A549 (cell line): ENCODE measurements at regions of chr10 and their contacts with region 1.

Region 1: DNA sequence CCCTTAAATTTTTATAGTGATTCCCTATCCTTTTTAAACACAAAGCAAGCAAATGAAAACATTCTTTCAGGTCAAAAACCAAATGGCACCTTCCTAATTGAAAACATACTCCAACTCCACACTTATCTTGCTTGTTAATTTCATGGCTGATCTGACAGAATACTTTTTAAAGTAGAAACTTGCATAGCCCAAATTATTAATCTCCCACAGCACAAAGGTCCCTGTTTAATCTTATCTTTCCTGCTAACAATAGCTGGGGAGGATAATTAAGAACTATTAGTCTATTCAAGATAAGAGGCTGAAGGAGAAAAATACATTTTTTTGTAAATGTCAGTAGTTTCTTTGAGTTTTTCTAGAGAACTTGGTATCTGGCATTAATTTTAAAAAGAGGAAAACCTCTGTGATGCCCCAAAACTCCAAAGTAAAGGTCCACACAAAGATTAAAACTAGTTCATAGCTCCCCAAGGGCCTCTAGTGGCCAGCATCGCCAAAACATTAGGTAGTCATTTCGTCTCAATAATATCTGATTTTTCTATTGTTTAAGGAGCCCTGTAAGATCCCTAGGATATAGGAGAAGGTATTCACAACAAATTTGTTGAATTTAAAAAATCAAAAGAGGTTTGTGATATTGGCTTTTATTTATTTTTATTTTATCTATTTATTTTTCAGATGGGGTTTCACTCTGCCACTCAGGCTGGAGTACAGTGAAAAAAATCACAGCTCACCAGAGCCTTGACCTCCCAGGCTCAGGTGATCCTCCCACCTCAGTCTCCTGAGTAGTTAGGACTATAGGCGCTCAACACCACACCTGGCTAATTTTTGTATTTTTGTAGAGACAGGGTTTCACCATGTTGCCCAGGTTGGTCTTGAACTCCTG is 14.7 kb downstream of the CDNF start:
- DNase-seq: peak; percentile 66
- ATAC-seq: peak in 1 of 2 experiments; percentile 56; a peak in 3 of 6 replicates
- H3K4me3 ChIP-seq: no peak overlapping the region
- H3K27ac ChIP-seq: peak overlapping the region; percentile 94 to 96
- H3K4me1 ChIP-seq: peaks cover 52% of the 10 kb centered on the region
- CTCF ChIP-seq: peak; percentile 96
- EP300 ChIP-seq: no peak
- POLR2A ChIP-seq: no peak
- RAD21 ChIP-seq: peak; percentile 97 to 98

Region 2: GRCh38 chr10:14195433-14195832 is 627.7 kb before region 1 on chr10:
- CTCF ChIA-PET with region 1: interaction called, 16 read pairs
- POLR2A ChIA-PET with region 1: no interaction called
- DNase-seq: no peak
- ATAC-seq: no peak
- H3K4me3 ChIP-seq: no peak overlapping the region
- H3K27ac ChIP-seq: no peak overlapping the region
- H3K4me1 ChIP-seq: no peaks in the 10 kb centered on the region
- CTCF ChIP-seq: no peak
- EP300 ChIP-seq: no peak
- POLR2A ChIP-seq: no peak
- RAD21 ChIP-seq: no peak

Region 3: DNA sequence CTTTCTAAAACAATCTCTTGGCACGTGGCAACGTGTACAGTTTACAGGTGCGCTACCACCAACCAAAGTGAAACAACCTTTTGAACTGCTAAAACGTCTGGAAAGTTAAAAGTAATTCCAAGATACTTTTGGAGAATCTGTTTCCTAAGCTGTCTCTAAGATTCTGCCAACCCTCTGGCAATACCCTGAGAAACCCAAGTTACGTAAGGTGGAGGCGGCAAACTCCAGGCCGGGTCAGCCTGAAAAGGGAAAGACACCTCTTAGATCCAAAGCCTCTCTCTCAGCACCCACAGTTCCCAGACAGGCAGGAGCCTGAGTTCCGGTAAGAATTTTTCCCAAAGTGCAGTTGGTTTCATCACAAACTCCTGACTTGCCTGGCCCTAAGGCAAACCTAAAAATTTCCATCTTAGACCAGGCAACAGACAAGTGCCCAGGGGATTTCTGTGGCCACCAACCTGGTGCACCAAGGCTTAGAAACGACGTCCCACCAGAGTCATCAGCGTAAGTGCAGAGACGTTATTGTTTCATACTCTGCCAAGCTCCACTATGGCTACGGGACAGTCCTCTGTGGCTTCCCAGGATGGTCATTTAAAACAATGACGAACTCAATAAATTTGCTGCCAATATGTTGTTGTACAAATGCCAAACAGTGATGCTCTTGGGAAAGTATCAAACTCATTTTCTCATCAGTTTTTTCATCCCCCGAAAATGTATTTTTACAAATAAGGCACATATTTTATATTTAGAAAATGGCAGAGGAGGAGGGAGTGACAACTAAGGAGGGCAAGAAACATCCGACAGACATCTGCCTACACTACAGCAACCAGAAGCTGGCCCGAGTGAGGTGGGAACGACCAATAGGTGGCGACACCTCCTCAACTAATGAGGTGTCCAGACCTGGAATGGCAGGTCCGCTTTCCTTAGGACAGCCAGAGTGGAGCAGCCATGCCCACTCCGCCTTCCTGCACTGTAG is 286.6 kb before region 1 on chr10:
- CTCF ChIA-PET with region 1: interaction called, 56 read pairs
- POLR2A ChIA-PET with region 1: interaction called, 3 read pairs
- DNase-seq: peak; percentile 50 to 81
- ATAC-seq: peak; percentile 57 to 79; a peak in 5 of 6 replicates
- H3K4me3 ChIP-seq: no peak overlapping the region
- H3K27ac ChIP-seq: peak overlapping the region; percentile 18 to 60; a peak in 2 of 6 replicates
- H3K4me1 ChIP-seq: peaks cover 59% of the 10 kb centered on the region
- CTCF ChIP-seq: peak; percentile 69
- EP300 ChIP-seq: no peak
- POLR2A ChIP-seq: no peak
- RAD21 ChIP-seq: peak; percentile 80 to 88

Region 4: DNA sequence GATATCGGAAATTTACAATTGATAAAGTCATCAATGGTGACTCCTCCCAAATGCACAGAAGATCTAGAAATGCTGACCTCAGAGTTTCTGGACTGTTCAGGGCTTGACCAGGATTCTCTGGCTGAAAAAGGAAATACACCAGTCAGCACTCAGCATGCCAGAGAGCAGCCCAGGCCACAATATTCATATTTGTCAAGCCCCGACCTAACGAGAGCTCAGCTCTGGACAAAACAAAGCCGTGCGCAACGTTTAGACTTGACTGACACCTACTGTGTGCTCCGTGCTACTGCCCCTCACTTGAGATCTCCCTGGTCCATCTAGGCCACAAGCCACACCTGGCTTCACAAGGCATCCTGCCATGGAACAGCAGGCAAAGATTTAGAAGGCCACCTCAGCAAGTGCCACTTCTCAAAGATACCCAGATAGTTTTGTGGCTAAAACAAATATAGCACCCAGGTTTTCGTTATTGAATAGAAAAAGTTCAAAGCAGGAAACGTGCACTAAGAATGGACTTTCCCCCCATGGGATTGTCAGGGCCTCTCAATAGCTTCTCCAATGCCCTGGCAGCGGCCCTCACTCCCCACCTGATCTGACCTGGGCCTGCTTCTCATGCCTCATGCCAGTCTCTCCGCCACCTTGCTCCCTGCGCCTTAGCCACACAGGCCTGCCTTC is 266.7 kb before region 1 on chr10:
- CTCF ChIA-PET with region 1: interaction called, 14 read pairs
- POLR2A ChIA-PET with region 1: no interaction called
- DNase-seq: peak; percentile 24 to 48
- ATAC-seq: peak; percentile 44 to 52; a peak in 5 of 6 replicates
- H3K4me3 ChIP-seq: no peak overlapping the region
- H3K27ac ChIP-seq: peak overlapping the region in 1 of 2 experiments; percentile 40; a peak in 3 of 6 replicates
- H3K4me1 ChIP-seq: peaks cover 85% of the 10 kb centered on the region
- CTCF ChIP-seq: no peak
- EP300 ChIP-seq: no peak
- POLR2A ChIP-seq: no peak
- RAD21 ChIP-seq: 0 out of 5 replicates have a peak, but pooled peaks of 1 of the 2 experiments have one; percentile 22

Region 5: GRCh38 chr10:14670551-14671240 is 152.4 kb before region 1 on chr10:
- CTCF ChIA-PET with region 1: interaction called, 12 read pairs
- POLR2A ChIA-PET with region 1: interaction called, 10 read pairs
- DNase-seq: peak; percentile 55 to 80
- ATAC-seq: peak; percentile 86 to 89
- H3K4me3 ChIP-seq: peak overlapping the region; percentile 23
- H3K27ac ChIP-seq: peak overlapping the region; percentile 71 to 87
- H3K4me1 ChIP-seq: peaks cover 52% of the 10 kb centered on the region
- CTCF ChIP-seq: no peak
- EP300 ChIP-seq: peak; percentile 82 to 85; a peak in 3 of 5 replicates
- POLR2A ChIP-seq: no peak
- RAD21 ChIP-seq: peak in 1 of 2 experiments; percentile 48; a peak in 2 of 5 replicates